ENCODE measurements at regions of chr9 and their contacts with region 1.

Region 1: GRCh38 chr9:127802576-127803443 is at the start of gene FPGS:
- DNase-seq: peak; percentile 85
- ATAC-seq: peak; percentile 93
- H3K4me3 ChIP-seq: peak within 1 kb of the TSS; percentile 71
- H3K27ac ChIP-seq: peak within 1 kb of the TSS; percentile 79
- H3K4me1 ChIP-seq: peaks cover 15% of the 10 kb centered on the region
- H3K27me3 ChIP-seq: no peaks in the 10 kb centered on the region
- CTCF ChIP-seq: no peak
- POLR2A ChIP-seq: peak; percentile 78
- RAD21 ChIP-seq: no peak
- total RNA-seq, gene FPGS: 43.9 and 45.5 TPM in 2 replicates

Region 2: DNA sequence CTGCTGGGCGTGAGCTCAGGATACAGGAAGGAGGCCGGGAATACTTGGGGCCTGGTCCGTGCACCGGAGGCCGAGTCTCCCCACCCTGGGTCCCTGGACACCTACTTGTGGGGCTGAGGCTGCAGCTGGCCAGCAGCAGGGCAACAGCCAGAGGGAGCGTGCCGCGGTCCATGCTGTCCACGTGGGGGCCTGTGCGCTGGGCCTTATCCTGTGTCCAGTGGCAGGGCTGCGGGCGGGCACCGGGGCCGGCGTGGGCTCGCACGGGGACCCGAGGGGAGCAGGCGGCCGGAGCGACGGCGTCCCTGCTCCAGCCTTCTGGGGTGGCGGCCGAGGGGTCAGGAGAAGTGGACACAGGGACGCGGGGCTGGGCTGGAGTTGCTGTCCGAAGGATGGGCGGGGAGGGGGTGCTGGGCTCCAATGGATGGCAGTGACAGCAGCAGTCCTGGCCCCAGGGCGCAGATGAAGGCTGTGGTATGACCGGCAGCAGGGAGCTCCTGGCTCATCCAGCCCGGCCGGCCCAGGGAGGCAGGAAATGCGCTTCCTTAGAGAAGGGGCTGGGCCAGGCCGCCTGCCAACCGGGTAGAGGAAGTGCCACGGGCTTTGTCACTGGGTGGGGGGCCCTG is 51.5 kb after region 1 on chr9 and contains the start of gene ENG:
- CTCF ChIA-PET with region 1: no interaction called
- POLR2A ChIA-PET with region 1: no interaction called
- dilution Hi-C with region 1: no loop called
- in situ Hi-C with region 1: no loop called
- intact Hi-C with region 1: loop called (anchors 5 kb)
- DNase-seq: peak; percentile 59
- ATAC-seq: peak; percentile 87
- H3K4me3 ChIP-seq: peak within 1 kb of the TSS; percentile 56
- H3K27ac ChIP-seq: peak within 1 kb of the TSS; percentile 87
- H3K4me1 ChIP-seq: peaks cover 11% of the 10 kb centered on the region
- H3K27me3 ChIP-seq: no peaks in the 10 kb centered on the region
- CTCF ChIP-seq: peak; percentile 31; the same call in 1 of the 2 replicates
- POLR2A ChIP-seq: no peak
- RAD21 ChIP-seq: no peak; the same call in 1 of the 2 replicates
- total RNA-seq, gene ENG: 3.6 and 4.2 TPM in 2 replicates

Measured in IMR-90 (cell line).